ENCODE measurements at regions of chr9 and their contacts with region 1.

Region 1: GRCh38 chr9:132901856-132902831 is 23.4 kb downstream of the SPACA9 start:
- DNase-seq: peak; percentile 78
- ATAC-seq: peak; percentile 66
- H3K4me3 Mint-ChIP-seq: no peak overlapping the region
- H3K27ac Mint-ChIP-seq: no peak overlapping the region
- H3K4me1 Mint-ChIP-seq: peaks cover 24% of the 10 kb centered on the region
- H3K27me3 Mint-ChIP-seq: no peaks in the 10 kb centered on the region
- CTCF ChIP-seq: peak; percentile 86

Region 2: GRCh38 chr9:132800038-132800648 is 102.0 kb before region 1 on chr9:
- CTCF ChIA-PET with region 1: interaction called, 32 read pairs
- POLR2A ChIA-PET with region 1: no interaction called
- DNase-seq: peak; percentile 74
- ATAC-seq: peak; percentile 76
- H3K4me3 Mint-ChIP-seq: no peak overlapping the region
- H3K27ac Mint-ChIP-seq: no peak overlapping the region
- H3K4me1 Mint-ChIP-seq: peaks cover 15% of the 10 kb centered on the region
- H3K27me3 Mint-ChIP-seq: peaks cover 48% of the 10 kb centered on the region
- CTCF ChIP-seq: peak; percentile 84

Region 3: DNA sequence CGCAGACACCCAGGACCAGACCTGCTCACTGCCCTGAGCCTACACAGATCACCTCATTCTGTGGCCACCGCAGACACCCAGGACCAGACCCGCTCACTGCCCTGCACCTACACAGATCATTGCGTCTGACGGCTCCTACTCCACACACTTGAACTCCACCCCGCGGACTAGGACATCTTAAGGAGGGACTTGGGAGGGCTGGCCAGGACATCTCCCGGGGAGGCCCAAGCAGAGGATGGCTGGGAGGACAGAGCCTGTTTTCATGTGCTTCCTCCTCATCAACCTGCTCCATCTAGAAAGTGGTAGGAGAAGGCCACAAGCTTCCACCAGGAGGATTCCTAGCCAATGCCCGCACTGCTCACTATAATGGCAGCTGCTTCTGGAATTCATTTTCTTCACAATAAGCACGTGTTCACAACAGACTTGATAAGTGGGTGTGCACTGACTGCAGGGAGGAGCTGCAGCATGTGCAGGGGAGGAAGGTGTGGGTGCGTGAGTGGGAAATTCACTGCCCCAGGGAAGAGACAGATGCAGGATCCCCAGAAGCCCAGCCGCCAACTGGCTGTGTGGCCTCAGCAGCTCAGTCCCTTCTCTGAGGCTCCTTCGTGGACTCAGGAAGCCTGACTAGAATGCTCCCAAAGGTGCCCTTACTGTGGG is 88.9 kb before region 1 on chr9:
- CTCF ChIA-PET with region 1: interaction called, 20 read pairs
- POLR2A ChIA-PET with region 1: no interaction called
- DNase-seq: no peak
- ATAC-seq: no peak
- H3K4me3 Mint-ChIP-seq: no peak overlapping the region
- H3K27ac Mint-ChIP-seq: no peak overlapping the region
- H3K4me1 Mint-ChIP-seq: no peaks in the 10 kb centered on the region
- H3K27me3 Mint-ChIP-seq: peaks cover 3% of the 10 kb centered on the region; the same call in 1 of the 2 replicates
- CTCF ChIP-seq: no peak

Region 4: DNA sequence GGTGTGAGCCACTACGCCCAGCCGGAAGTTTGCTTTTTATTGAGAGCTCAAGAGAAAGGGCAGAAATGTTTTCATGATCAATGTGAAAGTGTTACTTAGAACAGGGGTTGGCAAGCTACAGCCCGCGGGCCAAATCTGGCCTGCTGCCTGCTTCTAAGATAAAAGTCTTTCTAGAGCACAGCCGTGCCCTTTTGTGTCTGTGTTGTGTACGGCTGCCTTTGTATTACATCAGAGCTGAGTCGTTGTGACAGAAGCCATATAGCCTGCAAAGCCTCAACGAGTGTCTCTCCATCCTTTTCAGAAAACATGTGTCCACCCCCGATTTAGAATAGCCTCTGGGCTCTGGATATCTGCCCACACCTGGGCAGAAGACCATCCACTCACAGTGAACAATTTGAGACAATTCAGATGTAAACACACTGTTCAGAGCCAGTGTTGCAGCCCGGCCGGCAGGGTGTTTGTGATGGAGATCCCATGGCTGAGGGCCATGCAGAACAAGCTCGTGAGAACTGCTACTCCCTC is 52.9 kb before region 1 on chr9:
- CTCF ChIA-PET with region 1: interaction called, 10 read pairs
- POLR2A ChIA-PET with region 1: no interaction called
- DNase-seq: no peak
- ATAC-seq: no peak
- H3K4me3 Mint-ChIP-seq: no peak overlapping the region
- H3K27ac Mint-ChIP-seq: peak overlapping the region; percentile 15; the same call in 1 of the 2 replicates
- H3K4me1 Mint-ChIP-seq: peaks cover 15% of the 10 kb centered on the region
- H3K27me3 Mint-ChIP-seq: no peaks in the 10 kb centered on the region; the same call in 1 of the 2 replicates
- CTCF ChIP-seq: no peak

Region 5: GRCh38 chr9:132877824-132878694 is 24.1 kb before region 1 on chr9 and contains the start of gene AK8:
- CTCF ChIA-PET with region 1: interaction called, 17 read pairs
- POLR2A ChIA-PET with region 1: no interaction called
- DNase-seq: peak; percentile 77
- ATAC-seq: peak; percentile 69
- H3K4me3 Mint-ChIP-seq: peak within 1 kb of the TSS; percentile 74
- H3K27ac Mint-ChIP-seq: no peak within 1 kb of the TSS
- H3K4me1 Mint-ChIP-seq: 0 out of 2 replicates have a peak, but pooled peaks cover 3% of the 10 kb centered on the region
- H3K27me3 Mint-ChIP-seq: peaks cover 42% of the 10 kb centered on the region
- CTCF ChIP-seq: no peak
- total RNA-seq, gene AK8: 0.27 to 0.50 TPM (median 0.48 TPM) in 3 replicates

Measured in WTC11 (cell line).